ENCODE measurements at regions of chr4 and their contacts with region 1.

Region 1: GRCh38 chr4:142416711-142417275 is 429.3 kb downstream of the INPP4B start:
- DNase-seq: no peak
- ATAC-seq: peak; percentile 96
- H3K4me3 Mint-ChIP-seq: peak overlapping the region; percentile 60
- H3K27ac Mint-ChIP-seq: peak overlapping the region; percentile 98
- H3K4me1 Mint-ChIP-seq: peaks cover 43% of the 10 kb centered on the region
- H3K27me3 Mint-ChIP-seq: no peaks in the 10 kb centered on the region

Region 2: GRCh38 chr4:142405021-142405694 is 11.6 kb before region 1 on chr4:
- CTCF ChIA-PET with region 1: interaction called, 26 read pairs
- DNase-seq: peak; percentile 81
- ATAC-seq: peak; percentile 62
- H3K4me3 Mint-ChIP-seq: peak overlapping the region; percentile 89
- H3K27ac Mint-ChIP-seq: peak overlapping the region; percentile 99
- H3K4me1 Mint-ChIP-seq: peaks cover 55% of the 10 kb centered on the region
- H3K27me3 Mint-ChIP-seq: no peaks in the 10 kb centered on the region

Region 3: GRCh38 chr4:142443469-142443868 is 26.7 kb after region 1 on chr4:
- CTCF ChIA-PET with region 1: no interaction called
- DNase-seq: no peak
- ATAC-seq: no peak
- H3K4me3 Mint-ChIP-seq: no peak overlapping the region
- H3K27ac Mint-ChIP-seq: no peak overlapping the region
- H3K4me1 Mint-ChIP-seq: no peaks in the 10 kb centered on the region
- H3K27me3 Mint-ChIP-seq: no peaks in the 10 kb centered on the region

Region 4: DNA sequence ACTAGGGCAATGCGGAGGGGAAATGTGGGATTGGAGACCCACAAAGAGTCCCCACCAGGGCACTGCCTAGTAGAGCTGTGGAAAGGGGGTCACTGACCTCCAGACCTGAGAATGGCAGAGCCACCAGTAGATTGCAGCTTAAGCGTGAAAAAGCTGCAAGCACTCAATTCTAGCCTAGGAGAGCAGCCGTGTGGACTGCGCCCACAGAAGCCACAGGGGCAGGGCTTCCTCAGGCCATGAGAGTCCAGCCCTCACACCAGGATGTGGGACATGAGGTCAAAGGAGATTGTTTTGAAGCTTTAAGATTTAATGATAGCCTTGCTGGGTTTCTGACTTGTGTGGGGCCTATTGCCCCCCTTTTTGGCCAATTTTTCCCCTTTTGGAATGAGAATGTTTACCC is 50.3 kb after region 1 on chr4:
- CTCF ChIA-PET with region 1: no interaction called
- DNase-seq: no peak
- ATAC-seq: no peak
- H3K4me3 Mint-ChIP-seq: no peak overlapping the region
- H3K27ac Mint-ChIP-seq: no peak overlapping the region
- H3K4me1 Mint-ChIP-seq: peaks cover 8% of the 10 kb centered on the region
- H3K27me3 Mint-ChIP-seq: no peaks in the 10 kb centered on the region

Region 5: DNA sequence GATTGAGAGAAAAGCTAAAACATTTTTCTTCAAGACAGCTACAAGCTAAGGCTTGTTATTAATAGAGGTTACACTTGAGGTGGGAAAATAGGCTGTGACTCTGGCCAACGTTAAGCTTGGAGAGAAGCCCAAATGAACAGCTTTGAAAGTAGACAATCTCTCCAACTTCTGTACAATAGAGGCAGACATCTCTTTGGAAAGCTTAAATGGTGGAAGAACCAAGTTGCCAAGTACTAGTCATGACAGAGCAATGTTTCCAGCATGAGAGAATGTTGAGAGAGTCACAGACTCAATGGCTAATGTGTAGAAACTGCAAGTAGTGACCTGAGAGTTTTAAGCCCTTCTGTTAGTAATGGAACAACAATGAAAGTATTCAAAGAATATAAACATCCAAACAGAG is 131.2 kb after region 1 on chr4:
- CTCF ChIA-PET with region 1: no interaction called
- DNase-seq: no peak
- ATAC-seq: no peak
- H3K4me3 Mint-ChIP-seq: no peak overlapping the region
- H3K27ac Mint-ChIP-seq: no peak overlapping the region
- H3K4me1 Mint-ChIP-seq: peaks cover 25% of the 10 kb centered on the region
- H3K27me3 Mint-ChIP-seq: no peaks in the 10 kb centered on the region

Measured in activated CD8-positive, alpha-beta memory T cell treated with anti-CD3 and anti-CD28 coated beads, Interleukin-2, amount 10 ng/mL, durations not matched to agents 7 days and 5 days (primary cell).